ENCODE measurements at regions of chr1 and their contacts with region 1.

Region 1: DNA sequence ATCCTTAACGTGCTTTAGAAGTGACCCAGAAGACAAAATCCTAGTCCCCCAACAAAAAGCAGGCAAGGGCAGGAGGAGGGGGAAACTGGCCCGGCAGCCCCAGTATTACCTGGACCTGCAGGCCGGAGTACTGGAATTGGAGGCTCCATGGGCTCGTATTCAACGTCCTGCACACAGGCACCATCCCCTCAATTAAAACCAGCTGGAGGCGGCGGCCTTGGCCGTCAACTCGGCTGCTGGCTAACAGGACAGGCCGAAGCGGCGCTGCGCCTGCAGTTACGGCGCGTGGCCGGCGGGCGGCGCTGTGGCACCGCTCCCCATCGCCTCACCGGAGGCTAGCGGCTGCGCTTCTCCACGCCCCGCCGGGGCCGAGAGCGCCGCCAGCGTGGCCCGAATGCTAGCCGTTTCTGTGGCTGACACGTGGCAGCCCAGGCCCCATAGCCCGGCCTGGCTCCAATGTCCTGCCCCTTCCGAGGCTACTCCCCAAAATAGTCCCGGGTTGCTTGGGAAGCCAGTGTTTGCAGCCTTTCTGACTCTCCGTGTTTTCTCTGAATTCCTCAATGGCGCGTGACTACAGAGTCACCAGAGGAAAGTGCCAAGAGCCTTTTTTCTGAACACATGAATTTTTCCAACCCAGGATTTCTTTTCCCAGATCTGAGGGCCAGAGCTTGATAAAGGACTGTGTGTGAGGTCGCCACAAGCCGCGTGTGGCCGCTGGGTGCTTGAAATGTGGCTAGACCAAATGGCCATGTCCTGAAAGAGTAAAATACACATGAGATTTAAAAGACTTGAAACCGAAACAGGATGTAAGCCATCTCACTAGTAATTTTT is 82.5 kb downstream of the HHIPL2 start:
- DNase-seq: peak; percentile 87
- H3K4me3 Mint-ChIP-seq: peak overlapping the region; percentile 79
- H3K27ac Mint-ChIP-seq: peak overlapping the region; percentile 72
- H3K4me1 Mint-ChIP-seq: peaks cover 10% of the 10 kb centered on the region
- H3K27me3 Mint-ChIP-seq: no peaks in the 10 kb centered on the region

Region 2: DNA sequence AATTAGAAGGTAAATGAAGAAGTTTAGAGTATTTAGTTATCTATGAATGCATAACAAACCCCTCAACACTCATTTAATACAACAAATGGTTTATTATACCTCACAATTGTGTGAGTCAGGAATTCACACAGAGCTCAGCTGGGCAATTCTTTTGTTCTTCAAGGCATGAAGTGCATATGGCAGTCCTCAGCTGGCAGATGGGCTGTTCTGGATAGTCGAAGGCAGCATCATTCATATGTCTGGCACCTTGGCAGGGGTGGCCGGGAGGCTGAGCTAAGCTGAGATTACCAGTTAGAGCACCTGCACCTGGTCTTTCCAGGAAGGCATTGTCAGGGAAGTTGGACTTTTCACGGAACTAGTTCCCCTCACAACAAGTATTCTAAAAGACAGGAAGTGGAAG is 437.3 kb before region 1 on chr1:
- CTCF ChIA-PET with region 1: no interaction called
- POLR2A ChIA-PET with region 1: no interaction called
- intact Hi-C with region 1: no loop called
- DNase-seq: no peak
- H3K4me3 Mint-ChIP-seq: no peak overlapping the region
- H3K27ac Mint-ChIP-seq: no peak overlapping the region
- H3K4me1 Mint-ChIP-seq: no peaks in the 10 kb centered on the region
- H3K27me3 Mint-ChIP-seq: no peaks in the 10 kb centered on the region

Region 3: GRCh38 chr1:222424826-222425225 is 40.6 kb before region 1 on chr1:
- CTCF ChIA-PET with region 1: no interaction called
- POLR2A ChIA-PET with region 1: no interaction called
- intact Hi-C with region 1: no loop called
- DNase-seq: no peak
- H3K4me3 Mint-ChIP-seq: no peak overlapping the region
- H3K27ac Mint-ChIP-seq: no peak overlapping the region
- H3K4me1 Mint-ChIP-seq: peaks cover 30% of the 10 kb centered on the region
- H3K27me3 Mint-ChIP-seq: no peaks in the 10 kb centered on the region

Region 4: DNA sequence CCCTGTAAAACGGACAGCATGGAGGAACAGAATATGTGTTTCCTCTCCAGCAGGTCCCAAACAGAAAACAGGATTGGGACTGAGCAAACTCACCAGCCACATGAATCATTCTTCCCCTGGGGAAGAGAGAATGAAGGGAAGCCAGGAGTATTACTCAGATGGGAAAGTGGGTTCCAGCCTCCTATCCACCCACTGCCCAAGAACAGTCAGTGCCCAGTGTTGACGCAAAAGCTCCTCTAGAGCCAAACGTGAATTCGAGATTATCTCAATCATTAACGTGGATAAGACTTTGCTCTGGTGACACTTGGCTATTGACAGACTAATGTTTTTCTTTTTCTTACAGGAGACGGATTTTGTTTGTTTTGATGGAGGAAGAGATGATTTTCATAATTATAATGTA is 161.8 kb after region 1 on chr1:
- CTCF ChIA-PET with region 1: interaction called, 56 read pairs
- POLR2A ChIA-PET with region 1: no interaction called
- intact Hi-C with region 1: no loop called
- DNase-seq: no peak
- H3K4me3 Mint-ChIP-seq: no peak overlapping the region
- H3K27ac Mint-ChIP-seq: no peak overlapping the region
- H3K4me1 Mint-ChIP-seq: no peaks in the 10 kb centered on the region
- H3K27me3 Mint-ChIP-seq: no peaks in the 10 kb centered on the region

Region 5: DNA sequence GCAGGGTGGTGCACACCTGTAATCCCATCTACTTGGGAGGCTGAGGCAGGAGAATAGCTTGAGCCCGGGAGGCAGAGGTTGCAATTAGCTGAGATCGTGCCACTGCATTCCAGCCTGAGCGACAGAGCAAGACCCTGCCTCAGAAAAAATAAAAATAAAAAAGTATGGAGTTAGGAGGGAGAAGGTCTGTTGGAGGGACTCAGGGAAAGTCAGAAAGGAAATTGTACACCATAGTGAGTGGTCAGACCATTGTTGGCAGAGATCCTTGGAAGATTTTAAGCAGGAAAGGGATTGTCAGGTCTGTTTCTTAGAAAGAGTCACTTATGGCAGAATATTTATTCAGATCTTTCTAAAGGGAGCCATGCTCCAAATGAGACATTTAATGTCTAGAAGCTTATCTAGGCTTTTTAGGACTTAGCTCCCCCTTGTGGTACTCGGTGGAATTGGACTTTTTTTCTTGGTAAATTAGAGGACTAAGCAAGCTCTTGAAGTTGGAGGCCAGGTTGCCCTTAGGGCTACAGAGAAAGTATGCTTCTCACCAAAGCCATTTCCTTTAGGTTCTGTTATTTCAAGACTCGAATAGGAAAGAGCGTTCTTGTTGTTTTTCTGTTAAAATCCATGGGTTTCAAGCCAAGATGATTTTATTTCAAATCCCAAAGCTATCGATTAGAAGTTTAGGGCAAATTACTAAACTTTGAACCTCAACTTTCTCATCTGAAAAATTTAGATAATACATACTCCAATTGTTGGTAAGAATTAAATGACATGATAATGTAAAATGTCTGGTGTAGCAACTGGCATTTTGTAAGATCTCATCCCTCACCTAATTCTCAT is 169.0 kb after region 1 on chr1:
- CTCF ChIA-PET with region 1: interaction called, 56 read pairs
- POLR2A ChIA-PET with region 1: no interaction called
- intact Hi-C with region 1: loop called (anchors 1 kb)
- DNase-seq: peak; percentile 33
- H3K4me3 Mint-ChIP-seq: no peak overlapping the region
- H3K27ac Mint-ChIP-seq: no peak overlapping the region
- H3K4me1 Mint-ChIP-seq: peaks cover 2% of the 10 kb centered on the region
- H3K27me3 Mint-ChIP-seq: no peaks in the 10 kb centered on the region

Region 6: DNA sequence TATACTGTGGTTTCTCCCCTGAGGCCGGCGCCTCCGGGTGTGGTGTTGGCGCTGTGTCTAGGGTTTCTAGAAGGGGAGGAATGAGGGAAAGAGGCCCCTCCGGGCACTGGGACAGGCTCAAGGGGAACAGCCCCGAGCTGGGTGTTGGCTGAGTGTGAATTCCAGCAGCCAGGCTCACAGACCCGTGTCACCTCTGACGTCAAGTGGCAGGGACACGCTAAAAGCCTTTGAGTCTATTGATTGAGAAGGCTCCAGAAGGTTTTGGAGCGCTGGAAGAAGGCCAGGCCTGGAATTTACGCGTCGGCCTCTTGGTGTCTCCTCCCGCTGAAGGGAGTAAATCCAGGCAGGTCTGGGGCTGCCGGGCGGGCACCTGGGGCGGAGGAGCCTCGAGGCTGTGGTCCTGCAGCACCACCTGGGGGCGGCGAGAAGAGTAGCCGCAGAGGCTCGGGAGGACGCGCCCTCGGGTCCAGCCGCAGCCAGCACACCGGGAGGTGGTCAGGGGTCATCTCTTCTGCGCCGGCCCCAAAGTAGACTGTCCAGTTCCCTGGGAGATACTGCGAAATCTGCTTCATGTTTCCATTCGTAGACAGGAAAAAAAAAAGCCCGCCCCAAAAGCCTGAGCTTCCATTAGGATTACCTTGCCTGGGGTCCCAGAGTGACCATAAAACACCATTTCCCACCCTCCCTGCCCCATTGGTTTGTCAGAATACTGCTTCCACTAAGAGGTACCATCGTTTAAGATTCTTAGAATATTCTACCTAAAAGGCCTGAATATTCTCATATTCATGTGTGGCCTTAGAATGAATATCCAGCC is 616.0 kb after region 1 on chr1:
- CTCF ChIA-PET with region 1: no interaction called
- POLR2A ChIA-PET with region 1: no interaction called
- intact Hi-C with region 1: loop called (anchors 1 kb)
- DNase-seq: peak; percentile 83
- H3K4me3 Mint-ChIP-seq: peak overlapping the region; percentile 18
- H3K27ac Mint-ChIP-seq: no peak overlapping the region
- H3K4me1 Mint-ChIP-seq: no peaks in the 10 kb centered on the region
- H3K27me3 Mint-ChIP-seq: peaks cover 6% of the 10 kb centered on the region